ENCODE measurements at regions of chr3 and their contacts with region 1.

Region 1: DNA sequence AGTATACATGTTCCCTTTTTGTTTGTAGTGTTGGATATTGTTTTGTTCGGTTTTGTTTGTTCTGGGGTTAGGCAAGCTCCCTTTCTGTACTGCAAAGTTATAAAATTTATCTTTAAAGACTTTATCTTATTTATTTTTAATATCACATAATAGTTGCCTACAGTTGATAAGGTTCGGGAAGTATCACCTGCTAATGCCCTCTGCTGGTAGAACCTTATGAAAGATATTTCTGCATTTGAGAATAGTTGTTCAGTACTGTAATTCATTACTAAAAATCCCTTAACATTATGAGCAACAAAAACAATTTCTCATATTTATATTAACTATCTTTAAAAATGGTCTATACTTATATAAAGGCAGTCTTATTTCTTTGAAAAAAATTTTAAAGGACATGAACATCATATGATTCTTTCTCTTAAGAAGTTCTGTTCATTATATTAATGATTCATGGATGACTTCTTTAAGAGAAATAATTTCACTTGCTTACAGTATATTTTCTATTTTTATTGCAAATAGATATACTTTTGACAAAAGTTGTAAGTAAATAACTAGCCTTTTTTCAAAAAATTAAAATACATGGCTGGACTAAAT is 1126.8 kb downstream of the SI start:
- DNase-seq: peak in 1 of 2 experiments; percentile 23
- H3K4me3 ChIP-seq: no peak overlapping the region
- H3K27ac ChIP-seq: no peak overlapping the region
- H3K4me1 ChIP-seq: no peaks in the 10 kb centered on the region
- H3K27me3 ChIP-seq: no peaks in the 10 kb centered on the region
- CTCF ChIP-seq: peak; percentile 68

Region 2: GRCh38 chr3:163056874-163057497 is 894.5 kb before region 1 on chr3:
- CTCF ChIA-PET with region 1: no interaction called
- POLR2A ChIA-PET with region 1: no interaction called
- intact Hi-C with region 1: loop called (anchors 10 kb)
- DNase-seq: peak in 1 of 2 experiments; percentile 39
- H3K4me3 ChIP-seq: no peak overlapping the region
- H3K27ac ChIP-seq: no peak overlapping the region
- H3K4me1 ChIP-seq: no peaks in the 10 kb centered on the region
- H3K27me3 ChIP-seq: no peaks in the 10 kb centered on the region
- CTCF ChIP-seq: peak; percentile 78

Region 3: DNA sequence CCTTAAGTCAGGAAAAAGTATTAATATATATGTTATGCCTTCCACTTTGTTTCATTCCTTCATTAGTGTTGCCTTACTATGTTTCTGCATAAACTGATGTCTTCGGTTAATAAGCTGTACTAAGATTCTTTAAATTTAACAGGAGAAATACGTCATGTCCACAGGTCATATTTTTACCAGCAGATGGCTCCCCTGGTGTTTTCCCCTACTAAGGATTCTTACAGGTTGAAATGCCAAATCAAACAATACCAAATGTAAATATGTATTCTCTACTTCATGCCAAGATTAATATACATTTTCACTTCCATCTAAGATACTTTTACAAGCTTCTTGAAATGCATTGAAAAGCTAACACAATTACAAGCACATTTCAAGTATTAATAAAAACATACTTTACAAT is 475.3 kb before region 1 on chr3:
- CTCF ChIA-PET with region 1: no interaction called
- POLR2A ChIA-PET with region 1: no interaction called
- intact Hi-C with region 1: loop called (anchors 10 kb)
- DNase-seq: no peak
- H3K4me3 ChIP-seq: no peak overlapping the region
- H3K27ac ChIP-seq: no peak overlapping the region
- H3K4me1 ChIP-seq: no peaks in the 10 kb centered on the region
- H3K27me3 ChIP-seq: no peaks in the 10 kb centered on the region
- CTCF ChIP-seq: peak; percentile 50; the same call in 1 of the 2 replicates

Region 4: GRCh38 chr3:163817015-163817414 is 134.5 kb before region 1 on chr3:
- CTCF ChIA-PET with region 1: no interaction called
- POLR2A ChIA-PET with region 1: no interaction called
- intact Hi-C with region 1: no loop called
- DNase-seq: no peak
- H3K4me3 ChIP-seq: no peak overlapping the region
- H3K27ac ChIP-seq: no peak overlapping the region
- H3K4me1 ChIP-seq: no peaks in the 10 kb centered on the region
- H3K27me3 ChIP-seq: no peaks in the 10 kb centered on the region
- CTCF ChIP-seq: no peak

Region 5: DNA sequence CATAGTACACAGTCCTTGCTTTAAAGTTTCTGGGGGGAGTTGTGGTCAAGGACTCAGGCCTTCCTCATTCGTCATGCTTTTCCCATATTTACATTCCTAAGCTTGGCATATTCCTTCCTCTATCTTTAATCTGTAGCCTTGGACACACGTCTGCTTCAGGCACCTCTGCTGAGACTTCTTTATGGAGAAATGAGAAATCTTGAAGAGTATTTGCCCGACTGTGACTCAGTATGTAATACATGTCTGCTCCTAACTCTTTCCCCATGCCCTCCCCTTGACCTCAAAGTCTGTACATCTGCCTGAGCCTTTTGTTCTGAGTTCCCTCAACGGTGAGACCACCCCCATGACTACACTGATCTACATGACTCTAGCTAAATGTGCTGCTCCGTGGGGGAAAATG is 880.7 kb after region 1 on chr3:
- CTCF ChIA-PET with region 1: no interaction called
- POLR2A ChIA-PET with region 1: no interaction called
- intact Hi-C with region 1: no loop called
- DNase-seq: no peak
- H3K4me3 ChIP-seq: no peak overlapping the region
- H3K27ac ChIP-seq: no peak overlapping the region
- H3K4me1 ChIP-seq: no peaks in the 10 kb centered on the region
- H3K27me3 ChIP-seq: no peaks in the 10 kb centered on the region
- CTCF ChIP-seq: no peak

Measured in PC-9 (cell line).